ENCODE measurements at regions of chr4 and their contacts with region 1.

Region 1: GRCh38 chr4:103099691-103100392 is at the start of gene BDH2:
- DNase-seq: peak; percentile 87 to 95 (median 94)
- H3K4me3 ChIP-seq: peak within 1 kb of the TSS in 6 of 7 experiments; percentile 64 to 95 (median 77)
- H3K27ac ChIP-seq: peak within 1 kb of the TSS in 1 of 2 experiments; percentile 67
- H3K4me1 ChIP-seq: peaks cover 9 to 12% (median 10%) of the 10 kb centered on the region in 4 experiments
- H3K27me3 ChIP-seq: no peaks in the 10 kb centered on the region

Region 2: GRCh38 chr4:102918859-102919258 is 181.0 kb before region 1 on chr4:
- CTCF ChIA-PET with region 1: no interaction called
- POLR2A ChIA-PET with region 1: no interaction called
- DNase-seq: no peak
- H3K4me3 ChIP-seq: no peak overlapping the region
- H3K27ac ChIP-seq: no peak overlapping the region
- H3K4me1 ChIP-seq: no peaks in the 10 kb centered on the region
- H3K27me3 ChIP-seq: no peaks in the 10 kb centered on the region

Region 3: GRCh38 chr4:103075901-103076739 is 23.7 kb before region 1 on chr4:
- CTCF ChIA-PET with region 1: interaction called, 13 read pairs
- POLR2A ChIA-PET with region 1: no interaction called
- DNase-seq: peak; percentile 50 to 84 (median 75)
- H3K4me3 ChIP-seq: peak overlapping the region; percentile 44 to 84 (median 79)
- H3K27ac ChIP-seq: peak overlapping the region; percentile 73 to 94
- H3K4me1 ChIP-seq: peaks cover 0 to 38% (median 22%) of the 10 kb centered on the region in 4 experiments
- H3K27me3 ChIP-seq: no peaks in the 10 kb centered on the region

Region 4: GRCh38 chr4:103111598-103111997 is 11.8 kb after region 1 on chr4:
- CTCF ChIA-PET with region 1: interaction called, 10 read pairs
- POLR2A ChIA-PET with region 1: no interaction called
- DNase-seq: no peak
- H3K4me3 ChIP-seq: no peak overlapping the region
- H3K27ac ChIP-seq: no peak overlapping the region
- H3K4me1 ChIP-seq: no peaks in the 10 kb centered on the region
- H3K27me3 ChIP-seq: no peaks in the 10 kb centered on the region

Measured in common myeloid progenitor, CD34-positive (primary cell).